Activated T-helper 1 cell treated with anti-CD3 and anti-CD28 coated beads, Interleukin-12 subunit alpha, Interleukin-12 subunit beta, Interleukin-2, Interleukin-4 antibody, amounts not matched to agents 30 ng/mL and 10 ng/mL and 1 ng/mL, durations not matched to agents 14 hours and 24 hours and 36 hours (primary cell): ENCODE measurements at regions of chr10 and their contacts with region 1.

Region 1: GRCh38 chr10:102503281-102504220 is at the start of gene SUFU:
- DNase-seq: peak; percentile 97
- H3K4me3 Mint-ChIP-seq: no peak within 1 kb of the TSS
- H3K27ac Mint-ChIP-seq: peak within 1 kb of the TSS; percentile 84
- H3K4me1 Mint-ChIP-seq: peaks cover 25% of the 10 kb centered on the region
- H3K27me3 Mint-ChIP-seq: no peaks in the 10 kb centered on the region
- total RNA-seq, gene SUFU: 9.3 and 11.6 TPM in 2 replicates

Region 2: GRCh38 chr10:102120142-102120990 is 383.2 kb before region 1 on chr10 and contains the start of gene LDB1:
- intact Hi-C with region 1: loop called (anchors 1 kb)
- DNase-seq: peak; percentile 59
- H3K4me3 Mint-ChIP-seq: peak within 1 kb of the TSS; percentile 88
- H3K27ac Mint-ChIP-seq: peak within 1 kb of the TSS; percentile 90
- H3K4me1 Mint-ChIP-seq: peaks cover 52% of the 10 kb centered on the region
- H3K27me3 Mint-ChIP-seq: no peaks in the 10 kb centered on the region
- total RNA-seq, gene LDB1: 78.6 and 87.1 TPM in 2 replicates

Region 3: GRCh38 chr10:102245101-102245931 is 258.2 kb before region 1 on chr10 and contains the start of gene GBF1:
- intact Hi-C with region 1: loop called (anchors 1 kb)
- DNase-seq: peak; percentile 90
- H3K4me3 Mint-ChIP-seq: peak within 1 kb of the TSS; percentile 96
- H3K27ac Mint-ChIP-seq: peak within 1 kb of the TSS; percentile 91
- H3K4me1 Mint-ChIP-seq: peaks cover 38% of the 10 kb centered on the region
- H3K27me3 Mint-ChIP-seq: peaks cover 9% of the 10 kb centered on the region
- total RNA-seq, gene GBF1: 46.7 TPM in 2 replicates

Region 4: GRCh38 chr10:102438374-102438773 is 65.2 kb before region 1 on chr10:
- intact Hi-C with region 1: no loop called
- DNase-seq: no peak
- H3K4me3 Mint-ChIP-seq: peak overlapping the region; percentile 76
- H3K27ac Mint-ChIP-seq: peak overlapping the region; percentile 57
- H3K4me1 Mint-ChIP-seq: peaks cover 56% of the 10 kb centered on the region
- H3K27me3 Mint-ChIP-seq: no peaks in the 10 kb centered on the region

Region 5: DNA sequence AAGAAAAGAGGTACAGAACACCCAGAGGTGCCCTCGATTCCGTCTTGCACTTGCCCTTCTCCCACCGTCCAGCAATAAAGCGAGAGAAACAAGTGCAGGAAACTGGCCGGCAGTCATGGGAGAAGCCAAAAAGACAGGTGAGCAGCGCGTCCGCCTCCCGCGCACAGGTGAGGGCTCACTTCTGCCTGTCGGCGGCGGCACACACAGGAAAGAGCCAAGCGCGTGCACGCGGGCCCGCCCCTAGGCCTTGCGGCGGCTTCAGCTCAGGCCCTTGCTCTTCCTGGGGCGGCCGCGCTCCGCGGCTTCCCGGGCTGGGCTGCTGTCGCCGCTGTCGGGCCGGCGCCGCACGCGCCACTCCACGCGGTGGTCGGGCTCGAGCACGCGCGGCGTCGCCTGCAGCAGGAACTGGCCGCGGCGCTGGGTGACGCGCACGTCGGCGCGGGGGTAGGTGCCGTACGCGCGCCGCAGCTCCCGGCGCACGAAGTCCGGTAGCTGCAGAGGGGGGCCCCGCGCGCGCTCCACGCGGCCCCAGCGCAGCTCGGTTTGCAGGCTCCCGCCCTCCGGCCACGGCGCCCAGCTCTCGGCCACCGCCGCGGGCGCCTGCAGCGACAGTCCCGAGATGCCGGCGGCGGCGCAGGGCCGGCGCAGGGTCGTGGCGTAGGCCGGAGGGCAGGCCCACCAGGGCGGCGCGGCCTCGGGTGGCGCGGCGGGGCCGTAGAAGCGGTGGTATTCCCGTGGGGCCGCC is 53.2 kb before region 1 on chr10:
- intact Hi-C with region 1: loop called (anchors 1 kb)
- DNase-seq: peak; percentile 88
- H3K4me3 Mint-ChIP-seq: peak overlapping the region; percentile 95
- H3K27ac Mint-ChIP-seq: peak overlapping the region; percentile 90
- H3K4me1 Mint-ChIP-seq: peaks cover 33% of the 10 kb centered on the region
- H3K27me3 Mint-ChIP-seq: no peaks in the 10 kb centered on the region

Region 6: GRCh38 chr10:102492983-102493382 is 10.6 kb before region 1 on chr10:
- intact Hi-C with region 1: no loop called
- DNase-seq: no peak
- H3K4me3 Mint-ChIP-seq: no peak overlapping the region
- H3K27ac Mint-ChIP-seq: no peak overlapping the region
- H3K4me1 Mint-ChIP-seq: peaks cover 10% of the 10 kb centered on the region
- H3K27me3 Mint-ChIP-seq: no peaks in the 10 kb centered on the region

Region 7: DNA sequence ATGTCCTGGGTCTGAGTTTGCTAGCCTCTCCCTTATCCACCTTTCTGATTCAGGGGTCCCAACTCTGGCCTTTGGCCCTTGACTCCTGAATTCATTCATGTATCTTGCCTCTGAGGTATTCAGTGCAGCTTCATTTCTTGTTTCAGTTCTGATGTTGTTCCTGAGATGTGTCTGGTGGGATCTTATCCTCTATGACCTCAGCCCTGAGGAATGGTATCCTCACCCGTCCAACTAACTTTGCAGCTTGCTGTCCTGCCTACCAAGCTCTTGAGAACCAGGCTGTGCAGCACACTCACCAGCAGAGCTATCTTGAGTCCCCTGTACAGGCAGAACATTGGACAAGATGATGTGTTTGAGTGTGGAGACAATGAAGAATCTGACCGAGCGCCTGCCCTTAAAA is 14.0 kb after region 1 on chr10:
- intact Hi-C with region 1: no loop called
- DNase-seq: no peak
- H3K4me3 Mint-ChIP-seq: no peak overlapping the region
- H3K27ac Mint-ChIP-seq: no peak overlapping the region
- H3K4me1 Mint-ChIP-seq: no peaks in the 10 kb centered on the region
- H3K27me3 Mint-ChIP-seq: no peaks in the 10 kb centered on the region

Region 8: DNA sequence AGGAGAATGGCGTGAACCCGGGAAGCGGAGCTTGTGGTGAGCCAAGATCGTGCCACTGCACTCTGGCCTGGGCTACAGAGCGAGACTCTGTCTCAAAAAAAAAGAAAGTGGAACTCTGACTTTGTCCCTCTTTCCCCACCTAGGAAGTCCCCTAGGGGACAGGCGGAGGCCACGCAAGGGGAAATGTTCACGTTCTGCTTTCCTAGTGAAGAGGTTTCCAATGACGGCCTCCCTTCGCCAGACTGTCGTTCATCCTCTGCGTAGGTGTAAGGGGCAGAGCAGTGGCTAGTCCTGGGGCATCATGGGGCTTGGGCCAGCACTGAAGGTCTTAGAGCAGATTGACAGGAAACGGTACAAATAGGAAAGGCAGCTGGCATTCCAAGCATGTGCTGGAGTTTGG is 30.8 kb after region 1 on chr10:
- intact Hi-C with region 1: no loop called
- DNase-seq: no peak
- H3K4me3 Mint-ChIP-seq: no peak overlapping the region
- H3K27ac Mint-ChIP-seq: no peak overlapping the region
- H3K4me1 Mint-ChIP-seq: peaks cover 5% of the 10 kb centered on the region
- H3K27me3 Mint-ChIP-seq: peaks cover 4% of the 10 kb centered on the region

Region 9: DNA sequence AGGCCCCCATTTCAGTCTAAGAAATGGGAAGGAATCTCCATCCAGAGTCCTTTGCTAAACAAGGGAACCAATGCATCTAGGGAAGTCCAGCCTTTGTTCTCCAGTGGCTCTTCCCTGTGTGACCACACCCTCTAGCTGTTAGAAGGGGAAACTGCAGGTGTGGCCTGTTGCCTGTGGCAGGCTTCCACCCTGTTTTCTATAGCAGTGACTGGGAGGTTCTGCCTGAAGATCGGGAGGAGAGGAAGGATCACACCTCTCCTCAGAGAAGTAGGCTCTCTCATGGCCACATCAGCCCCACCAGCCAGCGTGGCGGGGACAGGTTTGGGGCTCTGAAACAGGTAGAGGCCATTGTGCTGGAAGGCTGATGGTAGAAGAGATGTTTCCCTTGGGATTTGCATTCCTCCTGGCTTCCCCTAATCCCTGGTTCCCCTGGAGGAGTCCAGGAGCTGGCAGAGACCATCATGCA is 93.0 kb after region 1 on chr10:
- intact Hi-C with region 1: loop called (anchors 1 kb)
- DNase-seq: no peak
- H3K4me3 Mint-ChIP-seq: no peak overlapping the region
- H3K27ac Mint-ChIP-seq: no peak overlapping the region
- H3K4me1 Mint-ChIP-seq: no peaks in the 10 kb centered on the region
- H3K27me3 Mint-ChIP-seq: no peaks in the 10 kb centered on the region

Region 10: DNA sequence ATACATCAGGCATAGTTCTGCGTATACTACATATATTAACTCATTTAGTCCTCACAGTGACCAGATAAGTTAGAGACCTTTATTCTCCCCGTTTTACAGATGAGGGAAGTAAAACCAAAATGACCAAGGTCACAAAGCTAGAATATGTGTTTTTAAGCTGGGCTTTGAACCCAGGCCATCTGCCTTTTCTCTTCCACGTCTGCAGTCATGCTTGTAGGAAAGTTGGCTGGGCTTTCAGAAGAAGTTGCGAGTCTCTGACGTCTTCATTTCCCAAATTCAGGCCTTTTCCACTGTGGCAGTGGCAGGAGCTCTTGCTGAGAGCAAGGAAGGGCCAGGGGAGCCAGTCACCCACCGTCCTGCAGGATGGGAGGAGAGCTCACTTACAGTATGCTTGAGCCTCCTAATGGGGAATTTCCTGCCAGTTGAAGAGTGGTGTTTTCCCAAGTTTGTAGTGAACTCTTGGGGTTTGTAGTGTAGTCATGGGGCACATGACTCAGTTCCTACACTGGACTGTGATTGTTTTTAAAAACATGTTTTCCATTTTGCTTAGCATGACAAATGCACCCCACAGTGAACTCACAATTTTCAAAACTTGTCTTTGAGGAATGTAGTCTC is 299.5 kb after region 1 on chr10:
- intact Hi-C with region 1: loop called (anchors 5 kb)
- DNase-seq: peak; percentile 27
- H3K4me3 Mint-ChIP-seq: peak overlapping the region; percentile 76
- H3K27ac Mint-ChIP-seq: peak overlapping the region; percentile 98
- H3K4me1 Mint-ChIP-seq: peaks cover 34% of the 10 kb centered on the region
- H3K27me3 Mint-ChIP-seq: no peaks in the 10 kb centered on the region